Natural killer cell (primary cell): ENCODE measurements at regions of chr11 and their contacts with region 1.

Region 1: GRCh38 chr11:66835768-66836405 is 7.4 kb upstream of the RCE1 start:
- DNase-seq: no peak
- ATAC-seq: no peak
- H3K4me3 ChIP-seq: no peak overlapping the region
- H3K4me3 Mint-ChIP-seq: no peak overlapping the region
- H3K27ac ChIP-seq: no peak overlapping the region
- H3K27ac Mint-ChIP-seq: peak overlapping the region in 1 of 2 donors; percentile 29
- H3K4me1 ChIP-seq: peaks cover 8% of the 10 kb centered on the region
- H3K4me1 Mint-ChIP-seq: peaks cover 23 to 27% of the 10 kb centered on the region in 2 donors
- H3K27me3 ChIP-seq: no peaks in the 10 kb centered on the region
- H3K27me3 Mint-ChIP-seq: no peaks in the 10 kb centered on the region
- CTCF ChIP-seq: no peak

Region 2: GRCh38 chr11:66545701-66546367 is 290.1 kb before region 1 on chr11 and contains the start of gene ZDHHC24:
- intact Hi-C with region 1: loop called (anchors 10 kb)
- DNase-seq: peak; percentile 84 to 92
- ATAC-seq: peak; percentile 79 to 88 (median 80)
- H3K4me3 ChIP-seq: peak within 1 kb of the TSS; percentile 78
- H3K4me3 Mint-ChIP-seq: peak within 1 kb of the TSS; percentile 91
- H3K27ac ChIP-seq: peak within 1 kb of the TSS; percentile 90
- H3K27ac Mint-ChIP-seq: peak within 1 kb of the TSS; percentile 91 to 92
- H3K4me1 ChIP-seq: peaks cover 43% of the 10 kb centered on the region
- H3K4me1 Mint-ChIP-seq: peaks cover 41 to 52% of the 10 kb centered on the region in 2 donors
- H3K27me3 ChIP-seq: no peaks in the 10 kb centered on the region
- H3K27me3 Mint-ChIP-seq: peaks cover 0 to 9% of the 10 kb centered on the region in 2 donors
- CTCF ChIP-seq: no peak
- total RNA-seq, gene ZDHHC24: 18.5 to 34.9 (median 28.9) TPM